ENCODE measurements at regions of chr17 and their contacts with region 1.

Region 1: GRCh38 chr17:75667021-75667790 is at the starts of genes RECQL5 and SAP30BP:
- DNase-seq: peak; percentile 95
- ATAC-seq: peak; percentile 74
- H3K4me3 Mint-ChIP-seq: peak within 1 kb of the TSS; percentile 55
- H3K27ac Mint-ChIP-seq: peak within 1 kb of the TSS; percentile 27
- H3K4me1 Mint-ChIP-seq: peaks cover 47% of the 10 kb centered on the region
- H3K27me3 Mint-ChIP-seq: no peaks in the 10 kb centered on the region
- CTCF ChIP-seq: no peak
- total RNA-seq, gene RECQL5: 55.9 and 65.4 TPM in 2 replicates
- total RNA-seq, gene SAP30BP: 177 and 184 TPM in 2 replicates

Region 2: DNA sequence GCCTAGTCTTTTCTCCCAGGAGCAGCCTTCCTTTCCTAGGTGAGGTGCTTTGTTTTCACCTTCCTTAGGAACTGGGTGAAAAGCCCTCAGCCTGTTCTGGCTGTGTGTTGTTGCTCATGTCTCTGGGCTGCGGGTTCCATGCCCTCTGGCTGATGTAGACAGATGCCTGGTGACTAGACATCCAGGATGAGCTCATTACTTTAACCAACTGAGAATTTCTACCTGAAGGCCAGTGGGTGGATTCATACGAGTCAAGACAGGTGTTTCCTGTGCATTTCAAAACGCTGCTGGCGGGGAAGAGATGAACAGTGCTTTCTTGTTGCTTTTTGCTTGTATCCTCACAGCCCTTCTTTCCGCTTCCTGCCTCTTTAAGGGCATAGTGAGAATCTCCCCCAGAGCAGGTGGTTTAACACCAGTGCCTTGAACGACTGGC is 22.3 kb after region 1 on chr17:
- CTCF ChIA-PET with region 1: interaction called, 5 read pairs
- POLR2A ChIA-PET with region 1: interaction called, 12 read pairs
- intact Hi-C with region 1: loop called (anchors 2 kb)
- DNase-seq: peak; percentile 24
- ATAC-seq: peak; percentile 69
- H3K4me3 Mint-ChIP-seq: peak overlapping the region; percentile 70
- H3K27ac Mint-ChIP-seq: peak overlapping the region; percentile 92
- H3K4me1 Mint-ChIP-seq: peaks cover 66% of the 10 kb centered on the region
- H3K27me3 Mint-ChIP-seq: no peaks in the 10 kb centered on the region
- CTCF ChIP-seq: no peak

Region 3: DNA sequence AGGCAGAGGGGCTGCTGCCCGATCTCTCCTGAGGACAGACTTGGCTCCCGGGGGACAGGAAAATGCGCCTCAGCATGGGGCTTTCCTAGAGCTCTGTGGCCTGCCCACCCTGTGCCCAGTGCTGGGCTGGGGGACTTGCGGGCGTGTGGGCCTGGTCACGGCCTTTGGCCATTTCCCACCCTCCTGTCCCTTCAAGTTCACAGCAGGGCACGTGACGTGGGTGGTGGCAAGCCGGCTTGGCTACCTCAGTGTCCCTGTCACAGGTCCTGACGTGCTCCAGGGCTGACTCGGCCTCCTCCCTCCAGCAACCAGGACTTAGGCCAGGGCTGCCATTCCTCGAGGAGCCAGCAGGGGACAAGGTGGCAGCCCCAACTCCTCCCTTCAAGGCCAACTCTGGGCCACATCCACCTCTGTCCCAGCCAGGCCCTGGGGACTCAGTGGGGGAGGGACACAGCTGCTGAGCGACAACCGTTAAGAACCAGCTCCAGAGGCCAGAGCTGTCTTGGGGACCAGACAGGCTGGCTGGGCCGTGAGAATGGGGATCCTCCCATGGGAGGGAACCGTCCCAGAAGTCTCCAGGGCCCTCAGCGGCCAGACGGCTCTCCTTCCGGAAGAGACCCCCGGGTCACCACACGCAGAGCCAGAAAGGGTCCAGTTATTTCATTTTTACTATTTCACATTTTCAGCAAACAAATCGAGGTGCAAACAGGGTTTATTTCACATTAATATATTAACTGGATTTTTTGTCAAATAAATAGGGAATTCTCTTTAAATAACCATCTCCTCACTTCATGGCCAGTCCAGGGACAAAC is 178.0 kb after region 1 on chr17:
- CTCF ChIA-PET with region 1: no interaction called
- POLR2A ChIA-PET with region 1: interaction called, 4 read pairs
- intact Hi-C with region 1: loop called (anchors 5 kb)
- DNase-seq: peak; percentile 71
- ATAC-seq: peak; percentile 90
- H3K4me3 Mint-ChIP-seq: peak overlapping the region; percentile 66
- H3K27ac Mint-ChIP-seq: peak overlapping the region; percentile 75
- H3K4me1 Mint-ChIP-seq: peaks cover 29% of the 10 kb centered on the region
- H3K27me3 Mint-ChIP-seq: no peaks in the 10 kb centered on the region
- CTCF ChIP-seq: no peak

Region 4: GRCh38 chr17:76506408-76507349 is 839.5 kb after region 1 on chr17:
- CTCF ChIA-PET with region 1: no interaction called
- POLR2A ChIA-PET with region 1: no interaction called
- intact Hi-C with region 1: loop called (anchors 5 kb)
- DNase-seq: peak; percentile 93
- ATAC-seq: peak; percentile 85
- H3K4me3 Mint-ChIP-seq: no peak overlapping the region
- H3K27ac Mint-ChIP-seq: peak overlapping the region; percentile 50
- H3K4me1 Mint-ChIP-seq: peaks cover 26% of the 10 kb centered on the region
- H3K27me3 Mint-ChIP-seq: peaks cover 4% of the 10 kb centered on the region
- CTCF ChIP-seq: peak; percentile 66

Measured in activated B cell treated with CpG ODN at 0.5 μM for 24 hours (primary cell).